ENCODE measurements at regions of chr13 and their contacts with region 1.

Region 1: DNA sequence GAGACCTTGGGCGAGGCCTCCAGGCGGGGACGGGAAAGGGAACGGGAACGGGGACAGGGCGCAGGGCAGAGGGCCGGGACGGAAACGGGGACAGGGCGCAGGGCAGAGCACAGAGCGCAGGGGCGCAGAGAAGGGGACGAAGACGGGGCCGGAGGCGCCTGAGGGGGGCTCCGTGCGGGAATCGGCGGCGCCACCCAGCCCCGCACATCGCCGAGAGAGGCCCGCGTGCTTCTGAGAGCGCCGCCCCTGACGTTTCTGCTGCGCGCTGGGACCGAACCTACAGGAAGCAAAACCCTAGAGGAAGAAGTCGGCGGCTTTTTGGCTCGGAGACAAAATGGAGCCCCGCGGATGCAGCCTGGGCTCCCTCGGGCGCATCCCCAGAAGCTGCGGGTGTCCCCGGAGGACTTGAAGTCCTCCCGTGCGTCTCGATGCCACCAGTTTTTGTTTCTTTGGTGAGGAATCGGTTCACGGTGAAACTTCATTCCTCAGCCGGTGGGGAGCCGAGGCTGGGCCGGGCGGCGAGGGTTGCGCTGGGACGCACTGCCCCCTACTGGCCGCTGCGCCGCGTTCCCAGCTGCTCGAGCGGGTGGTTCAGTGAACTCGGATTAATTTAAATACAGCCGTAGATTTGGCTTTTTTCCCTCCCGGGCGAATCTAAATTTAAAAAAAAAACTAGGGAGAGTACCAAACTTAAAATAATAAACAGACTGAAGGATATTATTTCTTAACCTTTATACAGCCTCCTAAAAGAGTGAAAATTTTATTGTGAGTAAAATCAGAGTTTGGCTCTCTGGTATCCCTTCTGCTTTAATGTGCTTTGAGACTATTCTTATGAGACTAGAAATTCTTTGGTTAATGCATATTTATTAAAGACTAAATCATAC is 350.0 kb upstream of the ARGLU1 start:
- DNase-seq: peak; percentile 59 to 85
- H3K4me3 ChIP-seq: peak overlapping the region; percentile 76
- H3K27ac ChIP-seq: peak overlapping the region; percentile 60
- H3K4me1 ChIP-seq: peaks cover 14% of the 10 kb centered on the region
- H3K27me3 ChIP-seq: no peaks in the 10 kb centered on the region
- CTCF ChIP-seq: peak; percentile 97

Region 2: DNA sequence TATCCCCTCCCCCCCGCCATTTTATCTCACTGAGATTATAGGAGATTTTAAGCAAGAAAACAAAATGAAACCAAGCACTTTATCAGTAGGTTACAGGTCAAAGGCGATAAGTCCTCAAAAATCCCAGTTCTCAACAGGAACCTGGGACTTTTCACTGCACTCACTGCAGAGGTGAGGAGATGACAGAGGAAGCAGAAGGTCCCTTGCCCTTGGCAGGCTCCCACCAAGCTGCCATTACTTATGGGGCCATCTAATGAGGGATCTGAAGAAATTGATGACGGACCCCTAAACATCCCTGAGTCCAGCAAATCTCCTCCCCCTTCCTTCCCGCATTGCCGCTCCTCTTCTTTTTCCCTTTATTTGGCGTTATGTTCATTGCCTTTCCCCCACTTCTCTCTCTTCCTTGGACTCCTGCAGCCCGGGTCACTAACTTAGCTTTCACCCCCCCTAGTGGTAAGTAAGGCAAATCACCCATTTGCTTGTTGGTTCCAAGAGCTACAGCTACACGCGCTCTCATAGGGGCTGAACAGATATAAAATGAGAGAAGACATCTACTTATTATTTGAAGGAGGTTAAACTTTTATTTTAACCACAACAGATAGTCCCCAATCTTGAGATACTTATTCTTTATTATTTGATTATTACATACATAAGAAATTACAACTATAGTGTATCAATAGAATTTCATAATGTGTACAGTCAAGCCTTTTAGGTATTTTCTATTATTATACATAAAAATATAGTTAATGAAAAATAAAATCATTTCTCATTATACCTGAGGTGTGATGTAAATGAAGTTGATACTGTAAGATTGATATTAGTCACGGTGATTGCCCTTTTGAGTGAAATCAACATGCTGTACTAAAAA is 298.0 kb before region 1 on chr13:
- CTCF ChIA-PET with region 1: no interaction called
- POLR2A ChIA-PET with region 1: no interaction called
- intact Hi-C with region 1: loop called (anchors 5 kb)
- DNase-seq: peak in 1 of 2 experiments; percentile 12
- H3K4me3 ChIP-seq: no peak overlapping the region
- H3K27ac ChIP-seq: no peak overlapping the region
- H3K4me1 ChIP-seq: no peaks in the 10 kb centered on the region
- H3K27me3 ChIP-seq: 0 out of 2 replicates have a peak, but pooled peaks cover 11% of the 10 kb centered on the region
- CTCF ChIP-seq: peak; percentile 82

Region 3: DNA sequence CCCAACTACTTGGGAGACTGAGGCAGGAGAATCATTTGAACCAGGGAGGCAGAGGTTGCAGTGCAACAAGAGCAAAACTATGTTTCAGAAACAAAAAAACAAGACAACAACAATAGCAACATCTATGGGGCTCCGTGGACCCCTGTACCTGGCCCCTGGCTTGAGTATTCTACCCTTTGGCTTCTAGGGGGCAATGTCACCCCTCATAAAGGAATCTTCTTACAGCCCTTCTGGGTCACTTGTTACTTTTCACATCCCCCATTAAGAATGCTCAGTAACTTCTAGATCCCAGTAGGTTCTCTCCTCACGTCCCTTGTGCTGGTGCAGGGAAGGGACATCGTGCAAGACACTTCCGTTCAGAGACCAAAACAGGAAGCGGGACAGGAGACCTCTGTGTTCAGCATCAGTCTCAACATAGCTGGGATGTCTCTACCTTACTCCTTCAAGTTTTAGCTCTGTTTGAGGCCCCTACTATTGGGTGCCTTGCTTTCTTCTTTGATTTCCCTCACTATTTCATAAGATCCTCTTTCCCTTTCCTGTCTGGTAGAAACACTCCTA is 131.8 kb before region 1 on chr13:
- CTCF ChIA-PET with region 1: no interaction called
- POLR2A ChIA-PET with region 1: no interaction called
- intact Hi-C with region 1: loop called (anchors 2 kb)
- DNase-seq: no peak
- H3K4me3 ChIP-seq: no peak overlapping the region
- H3K27ac ChIP-seq: no peak overlapping the region
- H3K4me1 ChIP-seq: peaks cover 11% of the 10 kb centered on the region
- H3K27me3 ChIP-seq: no peaks in the 10 kb centered on the region
- CTCF ChIP-seq: no peak

Region 4: GRCh38 chr13:107088061-107088460 is 170.1 kb after region 1 on chr13:
- CTCF ChIA-PET with region 1: no interaction called
- POLR2A ChIA-PET with region 1: no interaction called
- intact Hi-C with region 1: no loop called
- DNase-seq: no peak
- H3K4me3 ChIP-seq: no peak overlapping the region
- H3K27ac ChIP-seq: no peak overlapping the region
- H3K4me1 ChIP-seq: no peaks in the 10 kb centered on the region
- H3K27me3 ChIP-seq: no peaks in the 10 kb centered on the region
- CTCF ChIP-seq: no peak

Region 5: GRCh38 chr13:107124129-107124718 is 206.3 kb after region 1 on chr13:
- CTCF ChIA-PET with region 1: no interaction called
- POLR2A ChIA-PET with region 1: no interaction called
- intact Hi-C with region 1: loop called (anchors 2 kb)
- DNase-seq: peak in 1 of 2 experiments; percentile 37
- H3K4me3 ChIP-seq: no peak overlapping the region
- H3K27ac ChIP-seq: no peak overlapping the region
- H3K4me1 ChIP-seq: no peaks in the 10 kb centered on the region
- H3K27me3 ChIP-seq: no peaks in the 10 kb centered on the region
- CTCF ChIP-seq: peak; percentile 79